A549 (cell line): ENCODE measurements at regions of chr14 and their contacts with region 1.

Region 1: DNA sequence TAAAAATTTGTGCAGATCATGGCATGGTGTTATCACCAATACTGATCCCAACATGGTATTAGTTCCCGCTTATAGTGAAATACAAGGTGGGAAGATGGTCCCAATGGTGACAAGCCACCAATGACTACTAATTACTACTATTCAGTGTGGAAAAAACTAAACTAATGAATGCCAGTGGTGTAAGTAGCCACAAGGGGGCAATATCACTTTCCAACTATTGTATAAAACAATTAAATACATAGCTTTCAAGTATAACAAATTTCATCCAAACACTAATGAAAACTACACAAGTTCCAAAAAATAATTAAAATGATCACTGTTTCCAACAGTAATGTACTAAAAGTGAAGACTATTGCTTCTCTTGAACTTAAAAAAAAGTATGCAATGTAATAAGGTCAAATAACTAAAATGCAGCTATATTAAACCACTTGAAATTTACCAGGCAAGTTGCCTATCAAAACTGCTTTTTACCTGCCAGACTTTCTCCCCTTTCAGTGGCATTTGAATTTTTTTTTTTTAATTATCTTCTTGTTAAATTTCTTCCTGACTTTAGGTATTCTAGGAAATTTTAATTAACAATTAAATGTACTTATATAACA is 58.0 kb downstream of the PAPLN start:
- DNase-seq: peak; percentile 43 to 44
- ATAC-seq: peak; percentile 47 to 71; a peak in 3 of 6 replicates
- H3K4me3 ChIP-seq: no peak overlapping the region
- H3K27ac ChIP-seq: peak overlapping the region in 1 of 2 experiments; percentile 58; a peak in 1 of 6 replicates
- H3K4me1 ChIP-seq: peaks cover 23% of the 10 kb centered on the region
- CTCF ChIP-seq: peak; percentile 82
- EP300 ChIP-seq: no peak
- POLR2A ChIP-seq: no peak
- RAD21 ChIP-seq: peak; percentile 59 to 71

Region 2: DNA sequence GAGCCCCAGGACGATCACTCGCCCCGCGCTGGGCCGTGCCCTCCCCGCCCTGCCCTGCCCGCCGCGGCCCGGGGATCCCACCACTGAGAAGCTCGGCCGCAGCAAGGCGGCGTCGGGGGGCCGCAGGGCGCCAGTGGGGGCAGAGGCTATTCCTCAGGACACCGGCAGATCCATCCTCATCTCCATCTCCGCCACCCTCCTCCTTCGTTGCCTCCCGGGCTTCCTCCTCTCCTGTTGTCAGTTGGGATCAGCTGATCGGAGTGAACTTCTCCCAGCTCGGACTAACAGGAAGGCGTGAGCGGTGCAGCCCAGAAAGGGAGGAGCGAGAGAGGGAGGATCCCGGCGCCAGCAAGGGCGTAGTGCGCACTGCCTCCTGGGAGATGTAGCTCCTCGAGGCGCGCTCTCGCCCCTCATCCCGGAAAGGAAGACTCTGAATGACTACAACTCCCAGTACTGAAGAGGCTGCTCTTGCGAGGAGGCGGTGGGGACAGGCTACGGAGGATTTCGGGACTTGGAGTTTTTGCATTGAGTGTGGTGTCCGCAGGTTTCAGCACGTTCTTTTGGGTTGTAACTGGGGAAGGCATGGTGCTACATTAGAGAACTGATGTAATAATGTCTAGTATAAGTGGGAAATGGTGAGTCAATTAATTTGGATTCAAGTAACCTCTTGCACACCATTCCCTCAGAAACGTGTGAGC is 268.3 kb before region 1 on chr14 and contains the start of gene ZFYVE1:
- CTCF ChIA-PET with region 1: no interaction called
- POLR2A ChIA-PET with region 1: no interaction called
- DNase-seq: peak; percentile 98
- ATAC-seq: peak; percentile 99 to 100
- H3K4me3 ChIP-seq: peak within 1 kb of the TSS; percentile 65
- H3K27ac ChIP-seq: peak within 1 kb of the TSS; percentile 66 to 89
- H3K4me1 ChIP-seq: peaks cover 10% of the 10 kb centered on the region; the same call in 2 of the 3 replicates
- CTCF ChIP-seq: no peak
- EP300 ChIP-seq: no peak
- POLR2A ChIP-seq: peak; percentile 61
- RAD21 ChIP-seq: no peak
- polyA plus RNA-seq, gene ZFYVE1: 9.3 and 9.4 TPM in 2 replicates

Region 3: GRCh38 chr14:73245401-73246325 is 49.6 kb before region 1 on chr14:
- CTCF ChIA-PET with region 1: no interaction called
- POLR2A ChIA-PET with region 1: no interaction called
- DNase-seq: no peak
- ATAC-seq: no peak
- H3K4me3 ChIP-seq: no peak overlapping the region
- H3K27ac ChIP-seq: no peak overlapping the region
- H3K4me1 ChIP-seq: no peaks in the 10 kb centered on the region
- CTCF ChIP-seq: no peak
- EP300 ChIP-seq: no peak
- POLR2A ChIP-seq: no peak
- RAD21 ChIP-seq: no peak

Region 4: GRCh38 chr14:73269729-73270531 is 25.4 kb before region 1 on chr14:
- CTCF ChIA-PET with region 1: interaction called, 10 read pairs
- POLR2A ChIA-PET with region 1: no interaction called
- DNase-seq: no peak
- ATAC-seq: no peak
- H3K4me3 ChIP-seq: no peak overlapping the region
- H3K27ac ChIP-seq: no peak overlapping the region
- H3K4me1 ChIP-seq: no peaks in the 10 kb centered on the region
- CTCF ChIP-seq: no peak
- EP300 ChIP-seq: no peak
- POLR2A ChIP-seq: no peak
- RAD21 ChIP-seq: no peak

Region 5: GRCh38 chr14:73283608-73284379 is 11.5 kb before region 1 on chr14:
- CTCF ChIA-PET with region 1: interaction called, 11 read pairs
- POLR2A ChIA-PET with region 1: no interaction called
- DNase-seq: peak in 1 of 2 experiments; percentile 46
- ATAC-seq: peak; percentile 57 to 77; a peak in 5 of 6 replicates
- H3K4me3 ChIP-seq: no peak overlapping the region
- H3K27ac ChIP-seq: no peak overlapping the region
- H3K4me1 ChIP-seq: 0 out of 3 replicates have a peak, but pooled peaks cover 5% of the 10 kb centered on the region
- CTCF ChIP-seq: peak; percentile 43
- EP300 ChIP-seq: no peak
- POLR2A ChIP-seq: no peak
- RAD21 ChIP-seq: peak; percentile 51 to 69

Region 6: GRCh38 chr14:73305499-73305898 is 10.2 kb after region 1 on chr14:
- CTCF ChIA-PET with region 1: interaction called, 20 read pairs
- POLR2A ChIA-PET with region 1: no interaction called
- DNase-seq: no peak
- ATAC-seq: no peak
- H3K4me3 ChIP-seq: no peak overlapping the region
- H3K27ac ChIP-seq: no peak overlapping the region
- H3K4me1 ChIP-seq: no peaks in the 10 kb centered on the region
- CTCF ChIP-seq: no peak
- EP300 ChIP-seq: no peak
- POLR2A ChIP-seq: no peak
- RAD21 ChIP-seq: no peak

Region 7: DNA sequence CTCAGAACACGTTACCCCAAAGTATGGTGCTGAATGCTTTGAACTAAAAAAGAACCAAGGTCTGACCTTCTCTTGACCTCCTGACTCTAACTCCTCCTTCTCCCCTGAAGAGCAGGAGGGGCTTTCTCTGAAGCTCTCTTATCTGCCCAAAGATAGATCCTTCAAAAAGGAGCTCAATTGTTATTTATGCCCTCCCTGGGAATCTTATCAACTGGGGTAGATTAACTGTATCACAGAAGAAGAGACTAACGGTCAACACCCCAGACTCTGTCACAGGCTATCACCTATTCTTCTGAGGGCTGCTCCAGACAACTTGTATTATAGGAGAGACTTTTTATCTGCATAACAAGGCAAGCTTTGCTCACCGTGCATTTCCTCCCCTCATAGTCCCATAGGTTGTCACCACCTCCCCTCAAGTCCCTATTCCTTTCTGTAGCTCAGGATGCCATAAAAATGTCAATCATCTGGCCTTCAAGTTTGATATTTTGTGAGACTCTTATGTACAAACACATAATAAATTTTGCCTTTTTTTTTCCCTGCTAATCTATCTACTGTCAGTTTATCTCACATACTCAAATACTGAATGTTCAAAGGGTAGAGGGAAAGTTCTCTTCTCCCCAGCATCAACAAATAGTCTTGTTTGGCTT is 28.7 kb after region 1 on chr14:
- CTCF ChIA-PET with region 1: interaction called, 10 read pairs
- POLR2A ChIA-PET with region 1: no interaction called
- DNase-seq: no peak
- ATAC-seq: peak in 1 of 2 experiments; percentile 38; a peak in 3 of 6 replicates
- H3K4me3 ChIP-seq: no peak overlapping the region
- H3K27ac ChIP-seq: no peak overlapping the region
- H3K4me1 ChIP-seq: peaks cover 29% of the 10 kb centered on the region
- CTCF ChIP-seq: no peak
- EP300 ChIP-seq: no peak
- POLR2A ChIP-seq: no peak
- RAD21 ChIP-seq: no peak

Region 8: GRCh38 chr14:73458151-73458976 is 163.1 kb after region 1 on chr14 and contains the start of gene NUMB:
- CTCF ChIA-PET with region 1: interaction called, 13 read pairs
- POLR2A ChIA-PET with region 1: interaction called, 3 read pairs
- DNase-seq: peak; percentile 99 to 100
- ATAC-seq: peak; percentile 91 to 94
- H3K4me3 ChIP-seq: peak within 1 kb of the TSS; percentile 89
- H3K27ac ChIP-seq: peak within 1 kb of the TSS; percentile 91 to 95
- H3K4me1 ChIP-seq: peaks cover 70% of the 10 kb centered on the region
- CTCF ChIP-seq: no peak
- EP300 ChIP-seq: no peak
- POLR2A ChIP-seq: peak; percentile 68
- RAD21 ChIP-seq: no peak
- polyA plus RNA-seq, gene NUMB: 134 and 151 TPM in 2 replicates

Region 9: GRCh38 chr14:73463411-73463810 is 168.1 kb after region 1 on chr14:
- CTCF ChIA-PET with region 1: interaction called, 176 read pairs
- POLR2A ChIA-PET with region 1: interaction called, 3 read pairs
- DNase-seq: peak in 1 of 2 experiments; percentile 52
- ATAC-seq: no peak
- H3K4me3 ChIP-seq: no peak overlapping the region
- H3K27ac ChIP-seq: peak overlapping the region in 1 of 2 experiments; percentile 84; a peak in 3 of 6 replicates
- H3K4me1 ChIP-seq: peaks cover 71% of the 10 kb centered on the region
- CTCF ChIP-seq: no peak
- EP300 ChIP-seq: no peak
- POLR2A ChIP-seq: no peak
- RAD21 ChIP-seq: no peak